ENCODE measurements at regions of chr15 and their contacts with region 1.

Region 1: DNA sequence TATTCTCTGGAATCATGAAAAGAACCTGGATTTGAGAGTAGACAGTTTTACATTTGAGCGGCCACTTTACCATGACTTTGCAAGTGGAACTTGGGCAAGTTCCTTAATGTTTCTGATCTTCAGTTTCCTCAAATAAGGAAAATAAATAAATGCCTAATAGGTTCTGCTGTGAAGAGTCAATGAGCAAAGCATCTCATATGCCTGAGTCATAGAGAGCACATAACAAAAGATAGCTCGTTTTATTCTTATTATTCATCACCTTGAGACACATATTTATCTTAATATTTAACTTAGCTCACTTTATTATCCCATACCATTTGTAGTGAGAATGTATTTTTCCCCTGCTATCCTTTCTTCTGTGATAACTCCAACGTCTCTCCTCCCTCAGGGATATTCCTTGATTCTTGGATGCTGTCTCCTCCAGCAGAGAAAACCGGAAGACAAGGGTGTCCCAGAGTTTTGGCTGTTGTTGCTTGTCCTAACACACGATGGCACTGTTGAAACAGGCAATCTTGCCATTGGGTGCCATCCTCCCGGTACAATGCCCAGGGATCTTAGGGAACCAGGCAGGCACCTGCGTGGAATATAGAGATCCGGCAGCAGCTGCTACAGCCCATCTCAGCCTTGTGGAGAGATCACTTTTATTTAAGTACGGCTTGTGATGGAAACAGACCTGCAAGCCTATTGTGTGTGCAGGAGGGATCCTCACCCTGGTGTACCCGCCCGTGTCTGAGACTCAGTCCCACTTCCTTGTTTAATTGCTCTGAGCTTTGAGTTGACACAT is 33.3 kb upstream of the VPS33B start:
- DNase-seq: peak; percentile 59 to 96 (median 76)

Region 2: DNA sequence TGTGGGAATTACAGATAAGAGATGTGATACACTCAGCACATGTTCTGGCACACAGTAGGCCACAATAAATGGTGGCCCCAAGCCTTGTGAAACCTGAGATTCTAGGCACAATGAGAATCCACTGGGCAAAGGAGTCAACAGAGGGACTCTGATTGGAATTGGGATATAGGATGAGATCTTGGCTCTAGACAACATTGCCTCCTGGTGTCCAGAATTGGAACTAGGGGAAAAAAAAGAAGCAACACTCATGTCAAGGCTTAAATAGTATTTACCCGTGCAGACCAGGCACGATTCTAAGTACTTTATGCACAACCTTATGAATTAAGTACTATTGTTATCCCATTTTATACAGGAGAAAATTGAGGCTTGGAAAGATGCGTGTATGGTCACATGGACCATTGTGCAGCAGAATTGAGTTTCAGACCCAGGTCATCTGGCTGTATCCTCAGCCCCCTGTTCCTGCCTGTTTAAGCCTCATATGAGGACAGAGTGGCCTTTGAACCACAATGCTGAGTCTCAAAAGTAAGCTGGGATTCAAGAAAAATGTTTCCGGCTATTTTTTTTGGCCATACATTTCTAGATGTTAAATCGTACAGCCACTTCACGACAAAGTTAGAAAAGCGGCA is 169.1 kb after region 1 on chr15:
- intact Hi-C with region 1: loop called (anchors 1 kb)
- DNase-seq: peak in 1 of 10 donors; percentile 16

Region 3: GRCh38 chr15:91271565-91272153 is 215.9 kb after region 1 on chr15:
- intact Hi-C with region 1: loop called (anchors 1 kb)
- DNase-seq: peak in 8 of 10 donors; percentile 26 to 86 (median 66)